Motor neuron (in vitro differentiated cells): ENCODE measurements at regions of chr17 and their contacts with region 1.

Region 1: DNA sequence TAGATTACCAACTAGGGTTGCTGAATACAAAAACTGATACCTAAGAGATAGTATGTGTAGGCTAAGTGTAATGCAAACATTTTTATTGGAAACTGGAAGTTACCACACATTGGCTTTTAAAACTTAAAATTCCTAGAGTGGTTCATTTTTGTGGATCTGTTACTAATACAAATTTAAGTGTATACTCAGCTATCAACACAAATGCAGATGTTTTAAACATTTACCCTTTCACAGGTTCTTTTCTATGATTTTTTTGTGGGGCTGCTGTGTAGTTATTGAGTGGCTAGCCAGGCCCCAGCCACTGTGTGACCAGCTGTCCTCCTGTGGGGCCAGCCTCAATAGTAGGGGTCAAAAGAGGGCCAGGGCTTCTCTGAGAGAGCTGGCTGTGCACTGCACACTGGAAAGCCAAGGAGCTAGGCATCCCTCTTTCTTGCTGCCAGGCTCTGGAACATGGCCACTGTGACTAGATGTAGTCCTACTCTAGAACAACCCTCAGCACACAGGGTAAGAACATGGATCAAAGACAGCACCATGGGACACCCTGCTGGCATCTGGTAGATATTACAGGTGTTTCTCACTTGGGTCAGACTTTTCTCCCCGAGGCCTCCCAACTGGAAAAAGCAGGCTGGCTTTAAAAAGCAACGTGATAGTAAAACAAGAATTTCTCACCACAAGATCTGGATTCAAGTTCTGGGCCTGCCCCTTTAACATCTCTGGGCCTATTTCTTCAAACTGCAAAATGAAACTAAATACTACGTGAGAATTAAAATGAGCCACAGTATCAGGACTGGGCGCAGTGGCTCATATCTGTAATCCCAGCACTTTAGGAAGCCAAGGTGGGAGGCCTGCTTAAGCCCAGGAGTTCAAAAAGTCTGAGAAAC is 7.3 kb upstream of the VEZF1 start:
- ATAC-seq: peak; percentile 63 to 84 (median 79)
- H3K4me3 ChIP-seq: no peak overlapping the region
- H3K27ac ChIP-seq: no peak overlapping the region
- H3K4me1 ChIP-seq: peaks cover 8 to 27% of the 10 kb centered on the region in 2 donors

Region 2: DNA sequence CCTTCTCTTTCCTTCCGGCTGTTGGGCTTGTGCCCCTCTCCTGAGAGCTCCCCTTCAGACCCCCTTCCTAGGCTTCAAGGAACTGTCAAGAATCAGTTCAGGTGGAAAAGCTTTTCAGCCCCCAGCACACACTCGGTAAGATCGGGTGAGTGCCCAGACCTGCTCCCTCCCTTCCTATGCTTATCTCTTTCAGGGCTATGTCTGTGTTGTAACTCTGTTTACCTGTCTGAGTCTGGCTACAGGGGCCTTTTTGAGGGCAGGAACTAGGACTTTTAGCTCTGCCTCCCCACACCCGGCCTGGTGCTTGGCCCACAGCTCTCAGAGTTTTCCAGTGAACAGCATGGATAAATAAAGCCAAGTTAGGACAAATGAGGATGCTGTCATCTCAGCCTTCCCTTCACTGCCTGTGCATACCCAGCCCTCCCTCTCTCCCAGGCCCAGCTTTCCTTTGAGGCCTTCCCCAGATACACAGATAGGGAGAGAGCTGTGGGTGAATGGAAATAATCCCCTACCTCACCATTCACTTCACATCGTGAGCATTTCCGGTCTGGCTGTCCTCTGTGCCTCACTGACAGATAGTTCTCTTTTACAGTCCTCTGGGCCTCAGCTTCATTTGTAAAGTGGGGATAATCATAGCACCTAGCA is 139.8 kb before region 1 on chr17:
- in situ Hi-C with region 1: loop called in 7 of 9 experiments (anchors 5 to 25 kb)
- ATAC-seq: peak in 1 of 8 experiments; percentile 36
- H3K4me3 ChIP-seq: no peak overlapping the region
- H3K27ac ChIP-seq: no peak overlapping the region
- H3K4me1 ChIP-seq: peaks cover 5 to 9% of the 10 kb centered on the region in 2 donors

Region 3: GRCh38 chr17:57875309-57876115 is 119.8 kb before region 1 on chr17:
- in situ Hi-C with region 1: loop called in 3 of 9 experiments (anchors 10 to 25 kb)
- ATAC-seq: peak; percentile 74 to 90 (median 78)
- H3K4me3 ChIP-seq: no peak overlapping the region
- H3K27ac ChIP-seq: peak overlapping the region; percentile 83 to 96
- H3K4me1 ChIP-seq: peaks cover 37 to 48% of the 10 kb centered on the region in 2 donors

Region 4: DNA sequence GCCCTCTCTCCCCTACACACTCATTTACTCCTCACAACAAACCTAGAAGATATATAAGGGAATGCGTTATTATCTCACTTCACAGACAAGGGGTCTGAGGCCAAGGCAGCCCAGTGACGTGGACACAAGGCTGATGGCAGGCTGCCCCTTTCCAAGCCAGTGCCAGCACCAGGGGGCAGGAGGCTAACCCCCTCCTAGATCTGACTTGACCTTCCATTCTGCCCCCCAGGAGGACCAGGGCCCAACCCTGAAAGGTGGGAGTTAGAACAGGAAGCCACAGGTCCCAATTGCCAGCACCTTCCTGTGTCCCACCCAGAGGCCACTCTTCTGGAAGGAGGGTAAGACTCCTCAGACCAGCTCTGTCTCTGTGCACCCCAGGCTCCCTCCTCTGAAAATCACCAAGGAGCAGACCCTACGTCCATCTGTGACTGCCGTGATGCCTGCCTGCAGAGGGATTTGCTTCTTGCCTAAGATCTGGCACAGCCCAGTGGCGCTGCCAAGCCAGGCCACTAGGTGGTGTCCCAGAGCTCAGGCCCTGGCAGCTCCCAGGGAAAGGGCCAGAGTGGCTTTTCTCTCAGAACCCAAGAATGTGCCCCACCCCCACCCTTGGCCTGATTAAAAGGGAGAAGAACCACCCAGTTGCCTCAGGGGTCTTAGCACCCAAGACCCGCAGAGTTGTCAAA is 103.0 kb before region 1 on chr17:
- in situ Hi-C with region 1: loop called in 1 of 9 experiments (anchors 25 kb)
- ATAC-seq: peak; percentile 27 to 88 (median 37)
- H3K4me3 ChIP-seq: no peak overlapping the region
- H3K27ac ChIP-seq: peak overlapping the region; percentile 93
- H3K4me1 ChIP-seq: peaks cover 31 to 51% of the 10 kb centered on the region in 2 donors